A549 (cell line): ENCODE measurements at regions of chr17 and their contacts with region 1.

Region 1: DNA sequence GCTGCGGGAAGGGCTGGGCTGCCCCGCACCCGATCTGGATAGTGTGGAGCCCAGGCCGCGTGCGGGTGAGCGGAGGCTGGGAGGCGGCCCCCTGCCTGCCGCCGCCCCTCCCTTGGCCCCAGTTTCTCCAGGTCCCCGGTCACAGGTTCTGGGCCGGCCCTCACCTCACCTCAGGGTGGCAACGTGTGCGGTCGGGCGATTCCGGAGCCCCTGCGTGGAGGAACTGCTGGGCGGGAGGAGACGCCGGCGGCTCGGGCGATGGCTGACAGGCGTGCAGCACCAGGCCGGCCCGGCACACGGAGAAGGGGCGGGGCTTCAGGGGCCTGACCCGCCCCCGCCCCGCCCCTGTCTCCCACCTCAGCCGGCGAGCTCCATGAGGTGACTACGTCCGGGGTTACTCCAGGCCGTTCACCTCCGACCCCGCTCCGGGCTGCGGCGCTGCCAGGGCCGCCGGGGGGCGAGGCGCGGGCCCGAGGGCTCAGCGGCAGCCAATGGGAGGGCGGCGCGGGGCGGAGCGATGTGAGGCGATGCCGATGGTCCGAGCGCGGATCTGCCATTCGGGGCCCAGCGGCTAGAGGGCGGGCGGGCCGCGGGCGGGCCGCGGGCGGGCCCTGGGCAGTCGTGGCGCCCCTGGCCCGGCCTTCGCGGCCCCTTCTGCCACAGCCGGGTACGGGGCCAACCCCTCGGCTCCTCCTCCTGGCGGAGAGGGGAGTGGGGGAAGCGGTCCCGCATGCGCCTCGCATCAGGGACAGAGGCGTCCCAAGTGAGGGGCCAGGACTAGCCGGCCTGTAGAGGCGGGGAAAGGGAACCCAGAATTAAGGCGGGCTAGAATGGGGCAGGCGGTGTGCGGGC is 16.7 kb upstream of the C17orf78 start:
- DNase-seq: peak; percentile 96 to 98
- ATAC-seq: peak; percentile 89 to 90
- H3K4me3 ChIP-seq: peak overlapping the region; percentile 88
- H3K27ac ChIP-seq: peak overlapping the region; percentile 92 to 94
- H3K4me1 ChIP-seq: peaks cover 42% of the 10 kb centered on the region
- CTCF ChIP-seq: peak; percentile 9; the same call in 1 of the 3 replicates
- EP300 ChIP-seq: no peak
- POLR2A ChIP-seq: peak; percentile 86
- RAD21 ChIP-seq: no peak

Region 2: GRCh38 chr17:37299257-37299980 is 59.6 kb before region 1 on chr17:
- CTCF ChIA-PET with region 1: no interaction called
- POLR2A ChIA-PET with region 1: no interaction called
- DNase-seq: no peak
- ATAC-seq: 0 out of 6 replicates have a peak, but pooled peaks of 1 of the 2 experiments have one; percentile 27
- H3K4me3 ChIP-seq: no peak overlapping the region
- H3K27ac ChIP-seq: peak overlapping the region in 1 of 2 experiments; percentile 17; a peak in 3 of 6 replicates
- H3K4me1 ChIP-seq: peaks cover 44% of the 10 kb centered on the region
- CTCF ChIP-seq: no peak
- EP300 ChIP-seq: no peak
- POLR2A ChIP-seq: no peak
- RAD21 ChIP-seq: no peak

Region 3: DNA sequence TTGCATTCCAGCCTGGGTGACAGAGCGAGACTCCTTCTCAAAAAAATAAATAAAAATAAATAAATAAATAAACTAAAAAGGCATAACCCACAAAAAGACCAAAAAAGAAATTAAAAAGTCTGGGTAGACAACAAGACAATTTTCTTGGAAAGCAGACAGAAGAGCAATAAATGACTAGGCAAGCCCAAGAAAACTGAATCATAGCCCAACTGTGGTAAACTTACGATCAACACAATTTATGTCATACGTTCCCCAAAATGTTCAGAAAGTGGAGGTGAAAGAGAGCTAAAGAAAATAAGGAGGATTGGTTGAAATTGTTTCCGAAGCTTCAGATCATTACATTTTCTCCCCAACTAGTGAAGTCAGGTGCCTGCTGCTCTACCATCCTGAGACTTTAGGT is 14.5 kb before region 1 on chr17:
- CTCF ChIA-PET with region 1: interaction called, 3 read pairs
- POLR2A ChIA-PET with region 1: interaction called, 12 read pairs
- DNase-seq: no peak
- ATAC-seq: no peak
- H3K4me3 ChIP-seq: no peak overlapping the region
- H3K27ac ChIP-seq: no peak overlapping the region
- H3K4me1 ChIP-seq: peaks cover 9% of the 10 kb centered on the region
- CTCF ChIP-seq: no peak
- EP300 ChIP-seq: no peak
- POLR2A ChIP-seq: no peak
- RAD21 ChIP-seq: no peak